ENCODE measurements at regions of chr9 and their contacts with region 1.

Region 1: GRCh38 chr9:72022841-72023240 is 37.6 kb downstream of the C9orf57 start:
- H3K4me3 ChIP-seq: no peak overlapping the region
- H3K27ac ChIP-seq: no peak overlapping the region
- H3K4me1 ChIP-seq: no peaks in the 10 kb centered on the region
- CTCF ChIP-seq: no peak

Region 2: GRCh38 chr9:71384352-71384751 is 638.5 kb before region 1 on chr9:
- CTCF ChIA-PET with region 1: no interaction called
- POLR2A ChIA-PET with region 1: no interaction called
- H3K4me3 ChIP-seq: no peak overlapping the region
- H3K27ac ChIP-seq: no peak overlapping the region
- H3K4me1 ChIP-seq: no peaks in the 10 kb centered on the region
- CTCF ChIP-seq: no peak

Region 3: DNA sequence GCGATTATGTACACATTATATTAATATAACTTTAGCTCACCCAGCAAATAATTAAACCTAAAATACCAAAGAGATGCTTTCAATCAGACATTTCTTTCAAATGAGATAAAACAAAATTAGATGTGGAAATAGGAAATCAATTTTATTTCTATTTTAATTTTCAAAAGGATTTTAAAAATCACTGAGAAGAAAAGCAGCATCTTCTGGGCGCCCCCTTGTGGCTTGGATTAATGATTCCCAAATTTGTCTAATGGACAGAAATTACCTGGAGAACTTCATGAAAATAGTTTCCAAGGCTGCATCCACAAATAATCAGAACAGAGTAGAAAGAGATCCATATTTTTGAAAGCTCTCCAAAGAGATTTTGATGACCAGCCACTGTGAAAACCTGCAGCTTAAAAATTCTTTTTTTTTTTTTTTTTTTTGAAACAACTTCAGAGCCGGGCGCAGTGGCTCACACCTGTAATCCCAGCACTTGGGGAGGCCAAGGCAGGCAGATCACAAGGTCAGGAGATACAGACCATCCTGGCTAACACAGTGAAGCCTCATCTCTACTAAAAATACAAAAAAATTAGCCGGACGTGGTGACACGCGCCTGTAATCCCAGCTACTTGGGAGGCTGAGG is 203.6 kb before region 1 on chr9:
- CTCF ChIA-PET with region 1: interaction called, 42 read pairs
- POLR2A ChIA-PET with region 1: no interaction called
- H3K4me3 ChIP-seq: no peak overlapping the region
- H3K27ac ChIP-seq: no peak overlapping the region
- H3K4me1 ChIP-seq: no peaks in the 10 kb centered on the region
- CTCF ChIP-seq: no peak

Region 4: GRCh38 chr9:71911253-71912074 is 111.4 kb before region 1 on chr9 and contains the start of gene C9orf85:
- CTCF ChIA-PET with region 1: interaction called, 19 read pairs
- POLR2A ChIA-PET with region 1: interaction called, 12 read pairs
- H3K4me3 ChIP-seq: peak within 1 kb of the TSS; percentile 97
- H3K27ac ChIP-seq: peak within 1 kb of the TSS; percentile 90
- H3K4me1 ChIP-seq: no peaks in the 10 kb centered on the region; the same call in 1 of the 2 replicates
- CTCF ChIP-seq: no peak

Region 5: GRCh38 chr9:71984403-71984802 is 38.4 kb before region 1 on chr9:
- CTCF ChIA-PET with region 1: interaction called, 12 read pairs
- POLR2A ChIA-PET with region 1: no interaction called
- H3K4me3 ChIP-seq: no peak overlapping the region
- H3K27ac ChIP-seq: no peak overlapping the region
- H3K4me1 ChIP-seq: peaks cover 17% of the 10 kb centered on the region
- CTCF ChIP-seq: no peak

Region 6: GRCh38 chr9:72060513-72060912 is 37.7 kb after region 1 on chr9 and contains the start of gene C9orf57:
- CTCF ChIA-PET with region 1: no interaction called
- POLR2A ChIA-PET with region 1: no interaction called
- H3K4me3 ChIP-seq: no peak within 1 kb of the TSS
- H3K27ac ChIP-seq: no peak within 1 kb of the TSS
- H3K4me1 ChIP-seq: no peaks in the 10 kb centered on the region
- CTCF ChIP-seq: no peak

Region 7: DNA sequence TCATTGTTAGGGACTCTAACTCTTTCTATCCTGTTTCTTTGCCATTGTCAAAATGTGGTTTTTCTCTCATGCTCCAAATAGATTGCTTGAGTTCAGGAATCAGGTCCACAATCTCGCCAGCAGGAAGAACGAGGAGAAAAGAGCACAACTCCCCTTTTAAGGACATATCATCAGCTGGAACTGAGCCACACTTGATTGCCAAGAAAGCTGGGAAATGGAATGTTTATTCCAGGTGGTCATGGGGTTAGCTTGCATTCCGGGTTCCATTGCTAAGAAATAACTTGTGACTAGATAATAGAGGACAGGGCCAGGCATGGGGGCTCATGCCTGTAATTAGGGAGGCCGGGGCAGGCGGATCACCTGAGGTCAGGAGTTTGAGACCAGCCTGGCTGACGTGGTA is 70.0 kb after region 1 on chr9:
- CTCF ChIA-PET with region 1: no interaction called
- POLR2A ChIA-PET with region 1: no interaction called
- H3K4me3 ChIP-seq: no peak overlapping the region
- H3K27ac ChIP-seq: no peak overlapping the region
- H3K4me1 ChIP-seq: no peaks in the 10 kb centered on the region
- CTCF ChIP-seq: no peak

Measured in HEK293 (cell line).